PC-3 (cell line): ENCODE measurements at regions of chr1 and their contacts with region 1.

Region 1: DNA sequence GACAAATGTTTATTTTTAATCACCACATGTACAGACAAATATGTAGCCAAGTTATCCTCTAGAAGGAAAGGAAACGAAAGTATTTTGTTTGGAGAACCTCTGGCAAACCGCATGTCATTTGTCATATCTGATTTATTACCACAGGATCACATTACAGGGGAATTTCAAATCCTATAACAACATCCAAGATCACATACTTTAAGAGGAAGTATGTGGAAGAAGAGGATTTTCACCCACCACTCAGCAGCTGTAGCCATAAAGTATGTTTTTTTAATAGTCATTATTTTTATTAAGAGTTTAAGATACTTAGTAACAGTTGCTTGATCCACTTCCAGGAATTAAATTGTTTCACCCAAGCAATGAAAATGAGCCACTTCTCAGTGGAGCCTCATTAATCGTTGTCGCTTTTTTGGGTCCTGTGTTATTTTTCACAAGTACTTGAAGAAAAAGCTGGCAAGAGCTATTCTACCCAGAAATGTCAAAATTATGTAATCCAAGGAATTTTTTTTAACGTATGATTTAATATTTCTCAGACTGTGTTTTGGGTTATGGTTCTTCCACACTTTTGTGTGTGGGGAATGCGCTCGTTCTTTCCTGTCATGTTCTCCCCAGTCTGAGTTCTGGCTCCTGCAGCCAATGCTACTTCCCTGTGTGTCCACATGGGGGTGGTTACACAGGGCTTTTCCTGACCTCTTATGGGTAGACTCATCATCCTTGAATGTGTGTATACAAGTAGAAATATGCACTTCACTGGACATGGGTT is 6.9 kb downstream of the SERTAD4 start:
- DNase-seq: peak; percentile 95
- ATAC-seq: peak; percentile 88
- H3K4me3 ChIP-seq: no peak overlapping the region
- H3K27ac ChIP-seq: no peak overlapping the region
- H3K4me1 ChIP-seq: peaks cover 27% of the 10 kb centered on the region
- H3K27me3 ChIP-seq: no peaks in the 10 kb centered on the region
- CTCF ChIP-seq: peak; percentile 61

Region 2: DNA sequence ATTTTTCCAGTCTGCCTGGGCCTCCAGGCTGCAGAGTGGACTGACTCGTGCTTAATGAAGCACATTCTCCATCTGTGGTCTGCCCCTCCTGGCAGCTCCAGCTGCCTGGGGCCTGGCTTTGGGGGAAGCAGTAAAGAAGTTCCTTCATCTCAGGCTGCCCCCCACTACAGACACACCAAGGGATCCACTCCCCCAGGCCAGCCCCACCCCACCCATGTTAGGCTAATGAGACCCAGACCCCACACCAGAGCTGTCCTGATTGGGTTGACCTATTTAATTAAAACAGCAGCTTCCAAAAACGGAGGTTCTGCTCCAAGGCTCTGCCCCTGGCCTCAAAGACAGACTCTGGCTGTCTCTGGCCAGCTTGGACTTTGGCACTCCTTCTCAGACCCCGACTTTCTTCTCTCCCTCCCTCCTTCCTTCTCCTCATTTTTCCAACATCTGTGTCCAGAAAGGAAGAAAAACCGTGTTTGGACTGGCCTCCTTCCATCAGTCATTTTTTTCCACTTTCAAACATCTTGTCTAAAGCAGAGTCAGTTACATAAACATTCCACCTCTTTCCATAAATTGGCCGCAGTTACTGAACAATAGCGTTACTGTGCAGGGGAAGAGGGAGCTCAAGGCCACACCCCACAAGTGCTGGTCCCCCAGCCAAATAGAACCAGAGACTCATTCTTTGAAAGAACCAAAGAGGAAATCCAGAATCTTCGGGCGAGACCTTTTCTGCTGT is 22.8 kb after region 1 on chr1:
- CTCF ChIA-PET with region 1: no interaction called
- POLR2A ChIA-PET with region 1: no interaction called
- intact Hi-C with region 1: loop called (anchors 2 kb)
- DNase-seq: peak; percentile 67
- ATAC-seq: peak; percentile 81
- H3K4me3 ChIP-seq: no peak overlapping the region
- H3K27ac ChIP-seq: peak overlapping the region; percentile 19
- H3K4me1 ChIP-seq: peaks cover 5% of the 10 kb centered on the region; the same call in 1 of the 2 replicates
- H3K27me3 ChIP-seq: no peaks in the 10 kb centered on the region
- CTCF ChIP-seq: no peak

Region 3: DNA sequence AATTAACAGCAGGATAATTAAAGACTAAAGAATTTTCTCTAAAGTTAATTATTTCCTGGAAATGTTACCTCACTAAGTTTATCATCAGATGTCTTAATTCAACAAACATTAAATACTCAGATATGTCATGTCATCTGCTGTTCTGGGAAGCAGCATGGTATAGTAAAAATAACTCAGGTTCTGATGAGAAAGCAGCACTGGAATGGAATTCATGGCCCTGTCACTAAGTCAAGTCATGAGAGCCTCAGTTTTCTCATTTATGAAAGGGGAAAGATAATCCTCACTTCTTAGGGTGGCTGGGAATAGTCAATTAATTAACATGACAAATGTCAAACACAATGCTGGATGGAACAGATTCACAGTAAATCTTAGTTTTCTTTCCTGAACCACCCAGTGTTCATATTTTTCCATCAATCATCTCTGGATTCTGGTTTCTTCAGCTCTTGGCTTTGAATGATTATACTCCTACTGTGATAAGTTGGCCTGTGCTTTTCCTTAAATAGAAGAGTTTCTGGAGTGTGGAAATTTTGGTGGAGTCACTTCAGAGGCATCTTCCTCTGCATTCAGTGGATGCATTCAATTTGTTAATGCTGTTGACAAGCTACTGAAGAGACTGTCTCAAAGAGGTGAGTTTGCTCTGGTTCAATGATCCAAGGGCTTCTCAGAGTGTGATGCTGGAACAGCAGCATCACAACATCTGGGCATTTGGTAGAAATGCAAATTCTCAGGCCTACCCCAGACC is 575.0 kb after region 1 on chr1:
- CTCF ChIA-PET with region 1: no interaction called
- POLR2A ChIA-PET with region 1: no interaction called
- intact Hi-C with region 1: no loop called
- DNase-seq: no peak
- ATAC-seq: no peak
- H3K4me3 ChIP-seq: no peak overlapping the region
- H3K27ac ChIP-seq: no peak overlapping the region
- H3K4me1 ChIP-seq: no peaks in the 10 kb centered on the region
- H3K27me3 ChIP-seq: no peaks in the 10 kb centered on the region
- CTCF ChIP-seq: no peak